ENCODE measurements at regions of chr14 and their contacts with region 1.

Region 1: DNA sequence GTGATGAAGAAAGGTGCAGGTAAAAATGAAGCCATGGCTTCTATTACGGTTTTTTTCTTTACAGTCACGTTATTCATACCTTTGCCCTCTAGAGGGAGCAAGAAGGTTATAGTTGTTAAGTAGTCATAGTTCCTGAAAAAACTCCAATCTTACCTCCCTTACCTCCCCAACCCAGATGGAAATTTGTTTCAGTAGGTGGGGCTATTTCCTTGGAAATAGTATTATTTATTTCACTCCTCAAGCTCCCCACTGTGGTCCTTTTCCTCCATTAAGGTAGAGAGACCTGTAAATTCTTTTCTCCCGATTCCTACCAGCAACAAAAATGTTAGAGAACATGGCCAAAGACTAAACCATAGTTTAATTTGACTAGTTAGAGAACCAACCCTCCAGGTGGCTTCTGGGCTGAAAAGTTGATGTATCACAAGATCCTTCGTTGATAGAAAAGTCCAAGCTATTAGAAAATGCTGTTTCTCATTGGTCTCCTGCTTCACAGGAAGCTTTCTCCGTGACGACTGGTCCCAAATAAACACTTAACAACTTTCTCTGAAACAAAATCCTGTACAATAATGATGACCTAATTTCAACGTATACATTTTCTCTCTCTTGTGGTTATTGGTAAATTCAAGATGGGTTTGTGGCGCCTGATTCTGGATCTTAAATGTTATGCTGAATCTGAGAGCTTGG is 43.5 kb downstream of the TMX1 start:
- DNase-seq: no peak
- ATAC-seq: peak; percentile 84 to 93
- H3K4me3 ChIP-seq: no peak overlapping the region
- H3K27ac ChIP-seq: no peak overlapping the region
- H3K4me1 ChIP-seq: no peaks in the 10 kb centered on the region
- H3K27me3 ChIP-seq: no peaks in the 10 kb centered on the region
- CTCF ChIP-seq: peak; percentile 53 to 81 (median 68)
- POLR2A ChIP-seq: no peak

Region 2: GRCh38 chr14:51716610-51717009 is 433.1 kb after region 1 on chr14:
- in situ Hi-C with region 1: no loop called
- intact Hi-C with region 1: loop called (anchors 5 kb)
- DNase-seq: no peak
- ATAC-seq: peak; percentile 92 to 94
- H3K4me3 ChIP-seq: no peak overlapping the region
- H3K27ac ChIP-seq: peak overlapping the region in 2 of 4 donors; percentile 18 to 57
- H3K4me1 ChIP-seq: peaks cover 0 to 18% of the 10 kb centered on the region in 2 donors
- H3K27me3 ChIP-seq: no peaks in the 10 kb centered on the region
- CTCF ChIP-seq: no peak
- POLR2A ChIP-seq: no peak

Region 3: DNA sequence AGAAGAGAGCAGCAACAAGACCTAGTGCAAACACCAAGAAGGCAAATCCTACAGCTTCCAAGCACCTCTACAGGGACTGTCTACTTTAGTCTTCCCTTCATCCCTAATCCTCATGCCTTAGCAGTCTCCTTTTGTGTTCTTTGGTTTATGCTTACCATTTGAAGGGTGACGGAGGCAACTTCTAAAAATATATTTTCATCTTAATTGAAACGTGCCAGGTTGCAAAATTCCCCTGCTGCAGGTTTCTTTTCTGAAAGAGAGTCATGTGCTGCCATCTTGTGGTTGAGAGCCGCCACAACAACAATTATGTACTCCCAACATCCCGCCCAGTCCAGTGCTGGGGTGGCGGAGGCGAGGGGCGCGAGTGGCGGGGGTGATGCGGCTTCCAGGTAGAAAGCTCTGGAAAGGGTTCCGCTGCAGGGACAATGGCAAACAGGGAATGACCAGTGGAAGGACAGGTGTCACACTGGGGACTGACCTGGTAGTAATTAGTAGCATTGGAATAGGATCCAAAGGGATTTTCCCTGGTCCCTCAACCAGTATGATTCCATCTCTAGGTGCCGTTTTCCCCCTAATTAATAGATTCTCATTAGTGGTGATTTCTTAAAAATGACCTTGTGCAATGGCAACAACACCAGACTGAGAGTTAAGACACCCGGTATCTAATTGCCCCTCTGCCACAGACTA is 496.6 kb after region 1 on chr14:
- in situ Hi-C with region 1: loop called (anchors 10 kb)
- intact Hi-C with region 1: loop called (anchors 1 kb)
- DNase-seq: peak; percentile 25 to 59
- ATAC-seq: peak; percentile 54 to 81
- H3K4me3 ChIP-seq: no peak overlapping the region
- H3K27ac ChIP-seq: no peak overlapping the region
- H3K4me1 ChIP-seq: no peaks in the 10 kb centered on the region
- H3K27me3 ChIP-seq: no peaks in the 10 kb centered on the region
- CTCF ChIP-seq: peak; percentile 47 to 87 (median 83)
- POLR2A ChIP-seq: no peak

Region 4: GRCh38 chr14:51989293-51990234 is 706.0 kb after region 1 on chr14 and contains the start of gene RTRAF:
- in situ Hi-C with region 1: loop called in 3 of 4 experiments (anchors 25 kb)
- intact Hi-C with region 1: loop called (anchors 5 kb)
- DNase-seq: peak; percentile 90 to 91
- ATAC-seq: peak; percentile 96 to 98
- H3K4me3 ChIP-seq: peak within 1 kb of the TSS; percentile 89 to 100 (median 98)
- H3K27ac ChIP-seq: peak within 1 kb of the TSS; percentile 93 to 96 (median 94)
- H3K4me1 ChIP-seq: peaks cover 26 to 27% of the 10 kb centered on the region in 2 donors
- H3K27me3 ChIP-seq: no peaks in the 10 kb centered on the region
- CTCF ChIP-seq: no peak
- POLR2A ChIP-seq: peak; percentile 83 to 89
- total RNA-seq, gene RTRAF: 68.6 to 91.2 (median 78.4) TPM